Psoas muscle (tissue), 8 donors: ENCODE measurements at regions of chr12 and their contacts with region 1.

Region 1: GRCh38 chr12:74725154-74725553 is 187.5 kb downstream of the ATXN7L3B start:
- DNase-seq: no peak
- ATAC-seq: no peak
- H3K4me3 ChIP-seq: no peak overlapping the region
- H3K27ac ChIP-seq: no peak overlapping the region
- H3K4me1 ChIP-seq: no peaks in the 10 kb centered on the region
- H3K27me3 ChIP-seq: no peaks in the 10 kb centered on the region
- CTCF ChIP-seq: no peak

Region 2: GRCh38 chr12:73321776-73322175 is 1403.4 kb before region 1 on chr12:
- intact Hi-C with region 1: loop called in 1 of 2 experiments (anchors 5 kb)
- DNase-seq: no peak
- ATAC-seq: no peak
- H3K4me3 ChIP-seq: no peak overlapping the region
- H3K27ac ChIP-seq: no peak overlapping the region
- H3K4me1 ChIP-seq: no peaks in the 10 kb centered on the region
- H3K27me3 ChIP-seq: no peaks in the 10 kb centered on the region
- CTCF ChIP-seq: no peak

Region 3: DNA sequence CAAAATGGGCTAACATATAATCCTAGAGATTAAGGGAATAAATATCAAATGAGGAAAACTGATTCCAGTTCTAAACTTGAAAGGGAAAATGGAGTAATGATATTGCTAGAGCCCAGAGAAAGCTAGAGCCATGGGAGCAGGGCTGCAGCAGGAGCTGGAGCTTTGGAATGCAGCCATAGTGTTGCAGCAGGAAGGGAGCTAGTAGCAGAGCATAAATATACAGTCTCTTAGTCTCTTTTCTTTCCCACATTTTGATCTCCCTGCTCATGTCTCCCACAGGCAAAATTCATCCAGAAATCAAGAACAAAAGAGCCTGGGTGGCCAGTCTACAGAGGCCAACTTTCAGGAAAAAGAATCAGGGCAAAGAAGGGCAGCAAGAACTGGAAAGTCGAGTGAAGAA is 66.2 kb after region 1 on chr12:
- intact Hi-C with region 1: no loop called
- DNase-seq: no peak
- ATAC-seq: peak; percentile 37 to 64 (median 52)
- H3K4me3 ChIP-seq: no peak overlapping the region
- H3K27ac ChIP-seq: no peak overlapping the region
- H3K4me1 ChIP-seq: no peaks in the 10 kb centered on the region
- H3K27me3 ChIP-seq: no peaks in the 10 kb centered on the region
- CTCF ChIP-seq: no peak